ENCODE measurements at regions of chr12 and their contacts with region 1.

Region 1: GRCh38 chr12:57896434-57897201 is 44.7 kb upstream of the ATP23 start:
- DNase-seq: peak; percentile 59
- H3K4me3 ChIP-seq: peak overlapping the region; percentile 53
- H3K4me3 Mint-ChIP-seq: peak overlapping the region; percentile 85
- H3K27ac Mint-ChIP-seq: peak overlapping the region; percentile 60
- H3K4me1 ChIP-seq: peaks cover 5% of the 10 kb centered on the region; the same call in 1 of the 2 replicates
- H3K4me1 Mint-ChIP-seq: peaks cover 14% of the 10 kb centered on the region
- H3K27me3 ChIP-seq: no peaks in the 10 kb centered on the region
- H3K27me3 Mint-ChIP-seq: peaks cover 4% of the 10 kb centered on the region
- CTCF ChIP-seq: peak in 1 of 2 experiments; percentile 39

Region 2: GRCh38 chr12:57803319-57803893 is 93.2 kb before region 1 on chr12:
- CTCF ChIA-PET with region 1: interaction called, 16 read pairs
- POLR2A ChIA-PET with region 1: interaction called, 3 read pairs
- intact Hi-C with region 1: no loop called
- DNase-seq: peak in 1 of 2 experiments; percentile 47
- H3K4me3 ChIP-seq: no peak overlapping the region
- H3K4me3 Mint-ChIP-seq: no peak overlapping the region
- H3K27ac Mint-ChIP-seq: no peak overlapping the region
- H3K4me1 ChIP-seq: no peaks in the 10 kb centered on the region
- H3K4me1 Mint-ChIP-seq: no peaks in the 10 kb centered on the region
- H3K27me3 ChIP-seq: no peaks in the 10 kb centered on the region
- H3K27me3 Mint-ChIP-seq: no peaks in the 10 kb centered on the region
- CTCF ChIP-seq: peak; percentile 59 to 83

Region 3: DNA sequence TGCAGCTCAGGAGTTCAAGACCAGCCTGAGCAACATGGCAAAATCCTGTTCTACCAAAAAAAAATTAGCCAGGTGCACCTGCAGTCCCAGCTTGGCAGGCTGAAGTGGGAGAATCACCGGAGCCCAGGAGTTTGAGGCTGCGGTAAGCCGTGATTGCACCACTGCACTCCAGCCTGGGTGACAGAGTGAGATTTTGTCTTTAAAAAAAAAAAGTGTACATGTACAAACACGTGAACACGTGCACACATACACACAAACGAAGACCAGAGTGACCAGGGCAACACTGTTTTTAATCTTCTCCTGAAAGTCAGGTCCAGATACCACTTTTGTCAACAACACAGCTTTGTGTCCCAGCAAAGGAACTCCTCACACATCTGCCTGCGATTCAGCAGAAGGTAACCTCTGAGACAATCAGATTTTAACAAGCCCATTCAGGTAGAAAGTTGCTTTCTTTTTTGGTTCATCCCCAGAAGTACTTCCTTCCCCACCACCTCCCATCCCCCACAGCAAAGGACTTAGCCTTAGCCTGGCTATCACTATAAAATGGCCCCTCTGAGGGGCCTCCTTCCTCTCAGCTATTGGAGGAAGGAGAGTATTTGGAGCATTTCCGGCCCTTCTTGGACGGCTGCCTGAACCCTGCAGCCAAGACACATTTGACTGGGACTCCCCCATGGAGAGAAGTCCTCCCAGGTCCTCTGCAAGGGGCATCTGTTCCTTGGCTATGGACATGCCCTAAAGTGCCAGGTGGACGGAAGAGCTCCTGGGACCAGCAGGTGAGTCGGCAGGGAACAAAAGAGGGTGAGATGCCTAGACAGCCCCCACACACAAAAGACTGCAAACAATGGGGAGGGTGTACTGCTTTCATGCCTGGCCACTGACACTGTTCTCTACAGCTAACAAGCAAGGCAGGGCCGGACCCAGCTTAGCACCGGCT is 59.9 kb before region 1 on chr12:
- CTCF ChIA-PET with region 1: interaction called, 9 read pairs
- POLR2A ChIA-PET with region 1: interaction called, 4 read pairs
- intact Hi-C with region 1: loop called (anchors 1 kb)
- DNase-seq: no peak
- H3K4me3 ChIP-seq: no peak overlapping the region
- H3K4me3 Mint-ChIP-seq: no peak overlapping the region
- H3K27ac Mint-ChIP-seq: no peak overlapping the region
- H3K4me1 ChIP-seq: peaks cover 20% of the 10 kb centered on the region
- H3K4me1 Mint-ChIP-seq: peaks cover 24% of the 10 kb centered on the region
- H3K27me3 ChIP-seq: no peaks in the 10 kb centered on the region
- H3K27me3 Mint-ChIP-seq: no peaks in the 10 kb centered on the region
- CTCF ChIP-seq: no peak

Region 4: GRCh38 chr12:57865090-57865751 is 31.4 kb before region 1 on chr12:
- CTCF ChIA-PET with region 1: interaction called, 3 read pairs
- POLR2A ChIA-PET with region 1: interaction called, 7 read pairs
- intact Hi-C with region 1: loop called (anchors 2 kb)
- DNase-seq: peak; percentile 66 to 82
- H3K4me3 ChIP-seq: peak overlapping the region; percentile 49
- H3K4me3 Mint-ChIP-seq: peak overlapping the region; percentile 74
- H3K27ac Mint-ChIP-seq: peak overlapping the region; percentile 57
- H3K4me1 ChIP-seq: peaks cover 4% of the 10 kb centered on the region
- H3K4me1 Mint-ChIP-seq: no peaks in the 10 kb centered on the region
- H3K27me3 ChIP-seq: no peaks in the 10 kb centered on the region
- H3K27me3 Mint-ChIP-seq: no peaks in the 10 kb centered on the region
- CTCF ChIP-seq: no peak

Region 5: GRCh38 chr12:58639302-58639934 is 742.8 kb after region 1 on chr12:
- CTCF ChIA-PET with region 1: no interaction called
- POLR2A ChIA-PET with region 1: no interaction called
- intact Hi-C with region 1: no loop called
- DNase-seq: no peak
- H3K4me3 ChIP-seq: no peak overlapping the region
- H3K4me3 Mint-ChIP-seq: no peak overlapping the region
- H3K27ac Mint-ChIP-seq: no peak overlapping the region
- H3K4me1 ChIP-seq: no peaks in the 10 kb centered on the region
- H3K4me1 Mint-ChIP-seq: peaks cover 10% of the 10 kb centered on the region
- H3K27me3 ChIP-seq: no peaks in the 10 kb centered on the region
- H3K27me3 Mint-ChIP-seq: no peaks in the 10 kb centered on the region
- CTCF ChIP-seq: no peak